CD4-positive, alpha-beta T cell (primary cell): ENCODE measurements at regions of chr20 and their contacts with region 1.

Region 1: GRCh38 chr20:34312544-34313217 is 9.5 kb upstream of the AHCY start:
- DNase-seq: peak; percentile 77 to 92 (median 84)
- ATAC-seq: peak; percentile 100
- H3K4me3 ChIP-seq: no peak overlapping the region
- H3K4me3 Mint-ChIP-seq: no peak overlapping the region
- H3K27ac ChIP-seq: no peak overlapping the region
- H3K27ac Mint-ChIP-seq: no peak overlapping the region
- H3K4me1 ChIP-seq: peaks cover 20% of the 10 kb centered on the region
- H3K4me1 Mint-ChIP-seq: peaks cover 6% of the 10 kb centered on the region
- H3K27me3 ChIP-seq: peaks cover 14 to 20% of the 10 kb centered on the region in 2 experiments
- H3K27me3 Mint-ChIP-seq: peaks cover 24% of the 10 kb centered on the region
- CTCF ChIP-seq: peak; percentile 100

Region 2: DNA sequence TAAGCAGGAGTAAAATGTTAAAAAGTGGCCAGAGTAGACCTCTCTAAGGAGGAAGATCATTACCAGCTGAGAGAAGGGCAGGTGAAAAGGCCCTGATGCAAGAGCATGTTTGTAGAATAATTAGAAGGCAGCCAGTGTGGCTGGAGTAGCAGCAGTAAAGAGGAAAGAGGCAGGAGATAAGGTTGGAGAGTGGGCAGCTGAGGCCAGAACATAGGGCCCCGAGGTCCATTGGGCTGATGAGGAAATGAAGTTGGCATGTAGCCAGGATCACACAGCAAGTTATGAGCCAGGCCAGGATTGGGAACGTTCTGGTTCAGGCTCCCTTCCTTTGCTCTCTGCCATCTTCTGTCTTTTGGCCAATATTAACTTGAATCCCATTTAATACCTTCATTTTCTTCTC is 267.4 kb before region 1 on chr20:
- CTCF ChIA-PET with region 1: no interaction called
- POLR2A ChIA-PET with region 1: no interaction called
- intact Hi-C with region 1: no loop called
- DNase-seq: no peak
- ATAC-seq: no peak
- H3K4me3 ChIP-seq: no peak overlapping the region
- H3K4me3 Mint-ChIP-seq: no peak overlapping the region
- H3K27ac ChIP-seq: no peak overlapping the region
- H3K27ac Mint-ChIP-seq: no peak overlapping the region
- H3K4me1 ChIP-seq: peaks cover 46% of the 10 kb centered on the region
- H3K4me1 Mint-ChIP-seq: peaks cover 93% of the 10 kb centered on the region
- H3K27me3 ChIP-seq: no peaks in the 10 kb centered on the region
- H3K27me3 Mint-ChIP-seq: no peaks in the 10 kb centered on the region
- CTCF ChIP-seq: no peak

Region 3: DNA sequence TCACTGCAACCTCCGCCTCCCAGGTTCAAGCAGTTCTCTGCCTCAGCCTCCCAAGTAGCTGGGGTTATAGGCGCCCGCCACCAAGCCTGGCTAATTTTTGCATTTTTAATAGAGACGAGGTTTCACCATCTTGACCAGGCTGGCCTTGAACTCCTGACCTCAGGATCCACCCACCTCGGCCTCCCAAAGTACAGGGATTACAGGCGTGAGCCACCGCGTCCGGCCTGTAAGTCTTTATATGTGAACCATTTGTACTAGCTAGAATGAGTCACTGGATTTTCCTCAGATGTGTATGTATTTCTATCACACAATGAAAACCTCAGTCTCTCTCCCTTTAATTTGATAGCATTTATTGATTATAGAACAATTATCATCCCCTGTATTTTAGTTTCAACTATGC is 84.4 kb after region 1 on chr20:
- CTCF ChIA-PET with region 1: interaction called, 11 read pairs
- POLR2A ChIA-PET with region 1: no interaction called
- intact Hi-C with region 1: loop called in 1 of 2 experiments (anchors 2 kb)
- DNase-seq: no peak
- ATAC-seq: no peak
- H3K4me3 ChIP-seq: no peak overlapping the region
- H3K4me3 Mint-ChIP-seq: no peak overlapping the region
- H3K27ac ChIP-seq: no peak overlapping the region
- H3K27ac Mint-ChIP-seq: no peak overlapping the region
- H3K4me1 ChIP-seq: no peaks in the 10 kb centered on the region
- H3K4me1 Mint-ChIP-seq: peaks cover 33% of the 10 kb centered on the region
- H3K27me3 ChIP-seq: no peaks in the 10 kb centered on the region
- H3K27me3 Mint-ChIP-seq: no peaks in the 10 kb centered on the region
- CTCF ChIP-seq: no peak

Region 4: GRCh38 chr20:34435589-34435988 is 122.9 kb after region 1 on chr20:
- CTCF ChIA-PET with region 1: interaction called, 10 read pairs
- POLR2A ChIA-PET with region 1: no interaction called
- intact Hi-C with region 1: no loop called
- DNase-seq: no peak
- ATAC-seq: no peak
- H3K4me3 ChIP-seq: no peak overlapping the region
- H3K4me3 Mint-ChIP-seq: no peak overlapping the region
- H3K27ac ChIP-seq: no peak overlapping the region
- H3K27ac Mint-ChIP-seq: no peak overlapping the region
- H3K4me1 ChIP-seq: no peaks in the 10 kb centered on the region
- H3K4me1 Mint-ChIP-seq: peaks cover 20% of the 10 kb centered on the region
- H3K27me3 ChIP-seq: no peaks in the 10 kb centered on the region
- H3K27me3 Mint-ChIP-seq: no peaks in the 10 kb centered on the region
- CTCF ChIP-seq: no peak

Region 5: GRCh38 chr20:34516247-34517113 is 203.8 kb after region 1 on chr20 and contains the start of gene DYNLRB1:
- CTCF ChIA-PET with region 1: interaction called, 38 read pairs
- POLR2A ChIA-PET with region 1: interaction called, 14 read pairs
- intact Hi-C with region 1: no loop called
- DNase-seq: peak; percentile 88 to 96 (median 94)
- ATAC-seq: peak; percentile 74
- H3K4me3 ChIP-seq: peak within 1 kb of the TSS; percentile 82
- H3K4me3 Mint-ChIP-seq: peak within 1 kb of the TSS; percentile 99
- H3K27ac ChIP-seq: peak within 1 kb of the TSS; percentile 60 to 80
- H3K27ac Mint-ChIP-seq: peak within 1 kb of the TSS; percentile 94
- H3K4me1 ChIP-seq: peaks cover 30% of the 10 kb centered on the region
- H3K4me1 Mint-ChIP-seq: peaks cover 70% of the 10 kb centered on the region
- H3K27me3 ChIP-seq: no peaks in the 10 kb centered on the region
- H3K27me3 Mint-ChIP-seq: no peaks in the 10 kb centered on the region
- CTCF ChIP-seq: no peak
- total RNA-seq, gene DYNLRB1: 38.3 to 40.3 TPM

Region 6: DNA sequence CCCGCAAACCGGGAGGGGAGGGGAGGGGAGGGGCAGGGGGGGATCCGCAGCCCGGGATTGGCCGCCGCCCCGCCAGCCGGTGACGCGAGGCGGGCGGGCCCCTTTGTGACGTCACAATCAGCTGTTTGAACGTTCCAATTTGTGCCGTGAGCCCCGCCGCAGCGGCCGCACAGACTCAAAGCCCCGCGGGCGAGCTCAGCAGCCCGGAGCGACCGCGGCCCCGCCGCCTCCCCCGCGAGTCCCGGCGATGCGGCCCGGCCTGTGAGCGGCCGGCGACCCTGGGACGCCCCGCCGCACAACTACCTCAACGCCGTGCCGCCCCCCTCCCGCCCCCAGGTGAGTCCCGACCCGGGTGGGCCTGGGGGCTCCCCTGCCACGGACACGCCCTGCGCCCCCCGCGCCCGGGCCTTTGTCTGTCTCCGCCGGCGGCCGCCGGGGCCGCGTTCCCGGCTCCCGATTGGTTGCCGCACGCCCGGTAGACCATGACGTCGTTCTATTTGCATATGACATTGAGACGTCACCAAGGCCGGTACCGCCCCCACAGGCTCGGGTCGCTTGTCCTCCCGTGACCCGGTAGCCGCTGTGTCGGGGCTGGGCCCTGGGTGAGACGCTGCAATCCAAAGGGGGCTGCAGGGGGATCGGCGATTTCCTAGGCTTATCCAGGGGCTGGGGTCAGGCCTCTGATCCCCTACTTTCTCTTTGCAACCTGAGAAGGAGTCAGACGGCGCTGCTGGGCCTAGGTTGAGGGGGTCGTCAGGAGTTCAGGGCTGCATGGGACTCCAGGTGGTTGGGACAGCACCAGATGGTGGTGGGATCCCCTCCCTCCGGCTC is 391.7 kb after region 1 on chr20 and contains the start of gene TP53INP2:
- CTCF ChIA-PET with region 1: no interaction called
- POLR2A ChIA-PET with region 1: interaction called, 3 read pairs
- intact Hi-C with region 1: loop called (anchors 2 kb)
- DNase-seq: peak; percentile 67 to 96 (median 84)
- ATAC-seq: peak; percentile 58
- H3K4me3 ChIP-seq: peak within 1 kb of the TSS; percentile 94
- H3K4me3 Mint-ChIP-seq: peak within 1 kb of the TSS; percentile 97
- H3K27ac ChIP-seq: peak within 1 kb of the TSS; percentile 59 to 69
- H3K27ac Mint-ChIP-seq: peak within 1 kb of the TSS; percentile 94
- H3K4me1 ChIP-seq: peaks cover 30% of the 10 kb centered on the region
- H3K4me1 Mint-ChIP-seq: peaks cover 36% of the 10 kb centered on the region
- H3K27me3 ChIP-seq: no peaks in the 10 kb centered on the region
- H3K27me3 Mint-ChIP-seq: peaks cover 13% of the 10 kb centered on the region
- CTCF ChIP-seq: no peak
- total RNA-seq, gene TP53INP2: 65.8 to 72.7 TPM